OCI-LY7 (cell line): ENCODE measurements at regions of chr19 and their contacts with region 1.

Region 1: GRCh38 chr19:47427241-47428176 is 8.2 kb upstream of the MEIS3 start:
- DNase-seq: peak; percentile 76
- H3K4me3 ChIP-seq: peak overlapping the region; percentile 62
- H3K27ac ChIP-seq: peak overlapping the region; percentile 49
- H3K4me1 ChIP-seq: peaks cover 23% of the 10 kb centered on the region
- CTCF ChIP-seq: peak; percentile 89

Region 2: DNA sequence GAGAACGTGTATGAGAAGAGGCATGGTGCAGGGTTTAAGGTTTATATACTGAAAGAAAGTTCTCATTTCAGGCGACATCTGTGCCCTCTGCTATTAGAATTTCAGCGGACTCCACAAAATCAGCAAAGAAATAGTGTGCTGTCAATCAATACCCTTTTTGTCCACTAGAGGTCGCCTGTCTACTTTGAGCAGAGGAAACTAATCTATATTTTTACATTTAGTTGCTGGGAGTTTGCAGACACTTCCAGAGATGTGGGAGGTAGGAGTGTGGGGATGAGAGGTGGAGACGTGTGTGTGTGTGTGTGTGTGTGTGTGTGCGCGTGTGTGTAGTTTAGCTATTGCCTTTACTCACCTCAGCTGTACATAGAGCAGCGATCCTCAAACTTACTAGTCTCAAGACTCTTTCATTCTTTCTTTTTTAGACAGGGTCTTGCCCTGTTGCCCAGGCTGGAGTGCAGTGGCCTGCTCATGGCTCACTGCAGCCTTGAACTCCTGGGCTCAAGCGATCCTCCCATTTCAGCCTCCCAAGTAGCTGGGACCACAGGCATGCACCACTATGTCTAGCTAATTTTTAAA is 143.1 kb before region 1 on chr19:
- CTCF ChIA-PET with region 1: no interaction called
- POLR2A ChIA-PET with region 1: interaction called, 4 read pairs
- intact Hi-C with region 1: loop called (anchors 1 kb)
- DNase-seq: peak; percentile 68
- H3K4me3 ChIP-seq: no peak overlapping the region
- H3K27ac ChIP-seq: no peak overlapping the region
- H3K4me1 ChIP-seq: peaks cover 31% of the 10 kb centered on the region
- CTCF ChIP-seq: peak; percentile 97

Region 3: GRCh38 chr19:47296036-47296435 is 131.5 kb before region 1 on chr19:
- CTCF ChIA-PET with region 1: no interaction called
- POLR2A ChIA-PET with region 1: interaction called, 3 read pairs
- intact Hi-C with region 1: loop called (anchors 1 kb)
- DNase-seq: peak; percentile 93
- H3K4me3 ChIP-seq: no peak overlapping the region
- H3K27ac ChIP-seq: no peak overlapping the region
- H3K4me1 ChIP-seq: peaks cover 8% of the 10 kb centered on the region
- CTCF ChIP-seq: peak; percentile 87

Region 4: GRCh38 chr19:47391510-47392223 is 35.8 kb before region 1 on chr19:
- CTCF ChIA-PET with region 1: no interaction called
- POLR2A ChIA-PET with region 1: no interaction called
- intact Hi-C with region 1: loop called (anchors 2 kb)
- DNase-seq: peak; percentile 79
- H3K4me3 ChIP-seq: no peak overlapping the region
- H3K27ac ChIP-seq: no peak overlapping the region
- H3K4me1 ChIP-seq: peaks cover 6% of the 10 kb centered on the region
- CTCF ChIP-seq: peak; percentile 94